ENCODE measurements at regions of chr1 and their contacts with region 1.

Region 1: GRCh38 chr1:38818175-38818976 is 41.2 kb downstream of the RRAGC start:
- DNase-seq: peak; percentile 68 to 93 (median 88)
- ATAC-seq: peak; percentile 69
- H3K4me3 ChIP-seq: peak overlapping the region; percentile 23
- H3K27ac ChIP-seq: no peak overlapping the region
- H3K4me1 ChIP-seq: peaks cover 30 to 32% of the 10 kb centered on the region in 2 experiments
- H3K27me3 ChIP-seq: no peaks in the 10 kb centered on the region; a peak in 1 of 5 replicates
- CTCF ChIP-seq: peak; percentile 83 to 97 (median 83)
- EP300 ChIP-seq: no peak
- POLR2A ChIP-seq: no peak
- RAD21 ChIP-seq: peak; percentile 91 to 96

Region 2: GRCh38 chr1:38420666-38421065 is 397.7 kb before region 1 on chr1:
- CTCF ChIA-PET with region 1: no interaction called
- POLR2A ChIA-PET with region 1: no interaction called
- in situ Hi-C with region 1: no loop called
- intact Hi-C with region 1: no loop called
- DNase-seq: no peak
- ATAC-seq: no peak
- H3K4me3 ChIP-seq: no peak overlapping the region
- H3K27ac ChIP-seq: no peak overlapping the region
- H3K4me1 ChIP-seq: peaks cover 4 to 11% of the 10 kb centered on the region in 2 experiments; a peak in 3 of 5 replicates
- H3K27me3 ChIP-seq: peaks cover 2 to 4% of the 10 kb centered on the region in 2 experiments; a peak in 1 of 5 replicates
- CTCF ChIP-seq: no peak
- EP300 ChIP-seq: no peak
- POLR2A ChIP-seq: no peak
- RAD21 ChIP-seq: no peak

Region 3: GRCh38 chr1:38608202-38608864 is 210.0 kb before region 1 on chr1:
- CTCF ChIA-PET with region 1: interaction called, 9 read pairs
- POLR2A ChIA-PET with region 1: no interaction called
- in situ Hi-C with region 1: loop called (anchors 5 kb)
- intact Hi-C with region 1: loop called (anchors 1 kb)
- DNase-seq: peak; percentile 73 to 77 (median 74)
- ATAC-seq: peak; percentile 95
- H3K4me3 ChIP-seq: no peak overlapping the region
- H3K27ac ChIP-seq: no peak overlapping the region
- H3K4me1 ChIP-seq: peaks cover 6 to 10% of the 10 kb centered on the region in 2 experiments; a peak in 4 of 5 replicates
- H3K27me3 ChIP-seq: peaks cover 0 to 18% of the 10 kb centered on the region in 2 experiments; a peak in 2 of 5 replicates
- CTCF ChIP-seq: peak; percentile 84 to 87 (median 86)
- EP300 ChIP-seq: no peak
- POLR2A ChIP-seq: no peak
- RAD21 ChIP-seq: peak; percentile 82 to 88

Region 4: DNA sequence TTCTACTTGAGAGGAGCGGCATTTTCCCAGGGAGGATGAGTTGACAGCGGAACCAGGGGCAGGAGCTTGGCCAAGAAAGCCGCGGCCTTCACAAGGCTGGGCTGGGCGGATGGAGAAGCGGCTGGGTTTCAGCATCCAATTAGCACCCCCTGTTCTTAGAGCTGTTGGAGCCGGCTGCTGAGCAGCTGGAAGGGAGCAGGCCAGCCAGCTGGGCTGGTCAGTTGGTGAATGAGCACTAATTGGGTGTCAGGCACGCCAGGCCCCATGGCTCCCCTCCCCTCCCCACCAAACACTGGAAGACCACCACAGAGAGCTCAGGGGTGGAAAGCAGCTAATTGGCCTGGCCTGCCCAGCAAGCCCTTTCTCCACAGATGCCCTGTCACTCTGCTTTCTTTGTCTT is 204.4 kb before region 1 on chr1:
- CTCF ChIA-PET with region 1: no interaction called
- POLR2A ChIA-PET with region 1: no interaction called
- in situ Hi-C with region 1: loop called (anchors 5 kb)
- intact Hi-C with region 1: no loop called
- DNase-seq: no peak
- ATAC-seq: no peak
- H3K4me3 ChIP-seq: no peak overlapping the region
- H3K27ac ChIP-seq: no peak overlapping the region
- H3K4me1 ChIP-seq: peaks cover 7 to 16% of the 10 kb centered on the region in 2 experiments; a peak in 4 of 5 replicates
- H3K27me3 ChIP-seq: peaks cover 0 to 5% of the 10 kb centered on the region in 2 experiments; a peak in 1 of 5 replicates
- CTCF ChIP-seq: no peak
- EP300 ChIP-seq: no peak
- POLR2A ChIP-seq: no peak
- RAD21 ChIP-seq: no peak

Region 5: DNA sequence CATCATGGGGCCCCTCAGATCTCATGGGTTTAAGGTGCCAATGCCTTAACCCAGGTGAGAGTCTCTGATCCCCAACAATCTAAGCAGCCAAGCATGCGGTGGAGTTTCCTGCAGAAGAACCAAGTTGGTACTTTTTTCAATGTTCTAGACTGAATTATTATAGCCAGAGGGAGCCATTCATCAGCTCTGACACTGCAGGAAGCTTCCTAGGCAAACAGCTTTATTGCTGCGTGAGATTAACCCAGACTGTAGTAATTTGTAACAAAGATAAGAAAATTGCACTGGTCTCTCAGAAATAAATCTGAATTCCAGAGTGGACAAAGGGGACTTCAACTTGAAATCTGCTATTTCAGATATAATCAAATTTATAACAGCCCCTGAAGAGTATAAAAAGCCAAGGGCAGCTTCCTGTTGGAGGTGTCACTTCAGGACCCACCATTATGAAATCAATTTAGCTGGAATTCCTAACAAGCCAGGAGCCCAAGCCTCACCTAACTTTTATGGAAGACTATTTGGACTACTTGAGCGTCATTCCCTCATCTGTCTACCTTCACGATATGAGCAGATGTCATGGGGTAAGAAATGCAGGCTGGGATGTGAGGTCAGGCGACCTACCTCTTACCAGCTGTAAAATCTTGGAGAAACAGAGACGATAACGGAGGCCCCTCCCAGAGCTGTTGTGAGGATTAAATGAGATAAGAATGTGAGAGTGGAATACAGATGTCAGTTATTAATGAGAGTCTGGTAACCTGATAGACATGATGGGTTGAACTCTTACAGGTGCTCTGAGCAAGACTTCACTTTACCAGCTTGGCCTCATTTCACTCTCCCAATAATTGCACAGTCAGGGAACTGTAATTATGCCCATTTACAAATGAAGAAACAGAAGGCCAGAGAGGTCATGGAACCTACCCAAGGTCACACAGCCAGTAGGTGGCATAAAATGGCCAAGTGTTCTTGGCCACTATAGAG is 93.9 kb before region 1 on chr1:
- CTCF ChIA-PET with region 1: interaction called, 5 read pairs
- POLR2A ChIA-PET with region 1: no interaction called
- in situ Hi-C with region 1: no loop called
- intact Hi-C with region 1: loop called (anchors 5 kb)
- DNase-seq: peak in 3 of 4 experiments; percentile 31 to 51 (median 45)
- ATAC-seq: peak; percentile 42; the same call in 1 of the 3 replicates
- H3K4me3 ChIP-seq: no peak overlapping the region
- H3K27ac ChIP-seq: no peak overlapping the region
- H3K4me1 ChIP-seq: peaks cover 4 to 12% of the 10 kb centered on the region in 2 experiments; a peak in 4 of 5 replicates
- H3K27me3 ChIP-seq: no peaks in the 10 kb centered on the region; a peak in 2 of 5 replicates
- CTCF ChIP-seq: peak in 1 of 3 experiments; percentile 33; a peak in 2 of 6 replicates
- EP300 ChIP-seq: no peak
- POLR2A ChIP-seq: no peak
- RAD21 ChIP-seq: peak in 1 of 2 experiments; percentile 32; a peak in 2 of 4 replicates

Region 6: DNA sequence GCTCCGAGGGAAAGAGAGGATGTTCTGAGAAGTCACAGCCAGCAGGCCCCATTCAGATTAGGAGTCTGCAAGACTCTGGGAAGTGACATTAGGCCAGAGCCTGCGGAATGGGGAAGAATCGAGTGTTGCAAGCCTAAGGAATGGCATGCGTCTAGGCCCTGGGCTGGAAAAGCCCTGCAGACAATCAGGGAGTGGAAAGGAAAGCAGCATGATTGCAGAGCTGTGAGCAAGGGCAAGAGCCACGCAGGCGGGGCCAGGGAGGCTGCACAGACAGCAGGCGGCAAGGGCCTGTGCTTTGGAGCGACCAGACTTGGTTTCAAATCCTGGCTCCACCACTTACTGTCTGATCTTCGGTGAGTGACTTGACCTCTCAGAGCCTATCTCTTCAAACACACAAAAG is 77.0 kb before region 1 on chr1:
- CTCF ChIA-PET with region 1: no interaction called
- POLR2A ChIA-PET with region 1: no interaction called
- in situ Hi-C with region 1: no loop called
- intact Hi-C with region 1: loop called (anchors 10 kb)
- DNase-seq: peak in 1 of 4 experiments; percentile 32
- ATAC-seq: no peak
- H3K4me3 ChIP-seq: no peak overlapping the region
- H3K27ac ChIP-seq: no peak overlapping the region
- H3K4me1 ChIP-seq: peaks cover 28 to 36% of the 10 kb centered on the region in 2 experiments
- H3K27me3 ChIP-seq: no peaks in the 10 kb centered on the region; a peak in 1 of 5 replicates
- CTCF ChIP-seq: no peak
- EP300 ChIP-seq: no peak
- POLR2A ChIP-seq: no peak
- RAD21 ChIP-seq: no peak

Region 7: DNA sequence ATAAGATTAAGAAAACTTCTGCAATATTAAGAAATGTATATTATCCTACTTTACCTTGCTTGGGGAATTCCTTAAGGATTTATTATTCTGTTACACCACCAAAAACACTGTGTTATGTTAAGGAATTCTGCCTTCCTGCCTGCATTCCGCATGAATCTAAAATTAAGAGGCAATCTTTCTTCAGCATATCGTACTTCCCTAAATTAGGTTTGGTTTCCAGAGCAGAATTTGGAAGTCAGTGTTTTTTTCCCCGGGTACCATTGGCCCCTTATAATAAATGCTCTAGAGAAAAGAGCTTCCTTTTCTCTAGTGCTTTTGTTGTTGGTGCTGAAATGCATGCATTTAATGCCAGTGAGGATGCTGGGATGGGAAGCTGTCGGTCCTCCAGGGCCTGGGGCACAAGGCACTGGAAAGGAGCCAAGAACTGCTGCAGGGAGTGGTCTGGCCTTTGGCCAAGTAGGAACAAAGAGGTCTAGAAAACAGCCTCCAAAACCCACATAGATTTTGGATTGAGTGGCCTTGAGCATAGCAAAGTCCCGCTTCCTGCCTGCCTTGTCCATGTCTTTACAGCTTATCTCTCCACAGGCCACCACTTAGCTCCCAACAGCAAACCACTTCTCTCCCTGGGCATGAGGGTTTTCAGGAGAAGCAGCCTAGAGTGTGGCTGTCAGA is 28.7 kb before region 1 on chr1:
- CTCF ChIA-PET with region 1: no interaction called
- POLR2A ChIA-PET with region 1: interaction called, 5 read pairs
- in situ Hi-C with region 1: no loop called
- intact Hi-C with region 1: loop called (anchors 1 kb)
- DNase-seq: peak; percentile 54 to 77 (median 64)
- ATAC-seq: peak; percentile 51
- H3K4me3 ChIP-seq: no peak overlapping the region
- H3K27ac ChIP-seq: peak overlapping the region; percentile 35; the same call in 1 of the 3 replicates
- H3K4me1 ChIP-seq: peaks cover 30 to 46% of the 10 kb centered on the region in 2 experiments
- H3K27me3 ChIP-seq: no peaks in the 10 kb centered on the region
- CTCF ChIP-seq: no peak
- EP300 ChIP-seq: no peak
- POLR2A ChIP-seq: no peak
- RAD21 ChIP-seq: no peak